ENCODE measurements at regions of chr10 and their contacts with region 1.

Region 1: GRCh38 chr10:84375011-84375410 is 46.6 kb downstream of the CCSER2 start:
- DNase-seq: peak; percentile 65
- H3K4me3 ChIP-seq: no peak overlapping the region
- H3K27ac ChIP-seq: no peak overlapping the region
- H3K4me1 ChIP-seq: no peaks in the 10 kb centered on the region
- H3K27me3 ChIP-seq: no peaks in the 10 kb centered on the region

Region 2: GRCh38 chr10:84531396-84531795 is 156.4 kb after region 1 on chr10:
- in situ Hi-C with region 1: loop called (anchors 5 kb)
- DNase-seq: peak; percentile 42
- H3K4me3 ChIP-seq: no peak overlapping the region
- H3K27ac ChIP-seq: no peak overlapping the region
- H3K4me1 ChIP-seq: peaks cover 6% of the 10 kb centered on the region; the same call in 1 of the 2 replicates
- H3K27me3 ChIP-seq: no peaks in the 10 kb centered on the region

Measured in GM23248 (cell line).